WTC11 (cell line): ENCODE measurements at regions of chr11 and their contacts with region 1.

Region 1: GRCh38 chr11:118928108-118928870 is 2.6 kb upstream of the BCL9L start:
- DNase-seq: peak; percentile 94
- ATAC-seq: peak; percentile 53
- H3K4me3 Mint-ChIP-seq: peak overlapping the region; percentile 92
- H3K27ac Mint-ChIP-seq: peak overlapping the region; percentile 93
- H3K4me1 Mint-ChIP-seq: peaks cover 48% of the 10 kb centered on the region
- H3K27me3 Mint-ChIP-seq: peaks cover 24% of the 10 kb centered on the region
- CTCF ChIP-seq: peak; percentile 90

Region 2: GRCh38 chr11:118791111-118791965 is 137.0 kb before region 1 on chr11 and contains the start of gene DDX6:
- CTCF ChIA-PET with region 1: interaction called, 12 read pairs
- POLR2A ChIA-PET with region 1: interaction called, 7 read pairs
- DNase-seq: peak; percentile 91
- ATAC-seq: peak; percentile 41
- H3K4me3 Mint-ChIP-seq: peak within 1 kb of the TSS; percentile 98
- H3K27ac Mint-ChIP-seq: peak within 1 kb of the TSS; percentile 98
- H3K4me1 Mint-ChIP-seq: peaks cover 24% of the 10 kb centered on the region
- H3K27me3 Mint-ChIP-seq: no peaks in the 10 kb centered on the region
- CTCF ChIP-seq: no peak
- total RNA-seq, gene DDX6: 151 to 167 TPM (median 166 TPM) in 3 replicates

Region 3: DNA sequence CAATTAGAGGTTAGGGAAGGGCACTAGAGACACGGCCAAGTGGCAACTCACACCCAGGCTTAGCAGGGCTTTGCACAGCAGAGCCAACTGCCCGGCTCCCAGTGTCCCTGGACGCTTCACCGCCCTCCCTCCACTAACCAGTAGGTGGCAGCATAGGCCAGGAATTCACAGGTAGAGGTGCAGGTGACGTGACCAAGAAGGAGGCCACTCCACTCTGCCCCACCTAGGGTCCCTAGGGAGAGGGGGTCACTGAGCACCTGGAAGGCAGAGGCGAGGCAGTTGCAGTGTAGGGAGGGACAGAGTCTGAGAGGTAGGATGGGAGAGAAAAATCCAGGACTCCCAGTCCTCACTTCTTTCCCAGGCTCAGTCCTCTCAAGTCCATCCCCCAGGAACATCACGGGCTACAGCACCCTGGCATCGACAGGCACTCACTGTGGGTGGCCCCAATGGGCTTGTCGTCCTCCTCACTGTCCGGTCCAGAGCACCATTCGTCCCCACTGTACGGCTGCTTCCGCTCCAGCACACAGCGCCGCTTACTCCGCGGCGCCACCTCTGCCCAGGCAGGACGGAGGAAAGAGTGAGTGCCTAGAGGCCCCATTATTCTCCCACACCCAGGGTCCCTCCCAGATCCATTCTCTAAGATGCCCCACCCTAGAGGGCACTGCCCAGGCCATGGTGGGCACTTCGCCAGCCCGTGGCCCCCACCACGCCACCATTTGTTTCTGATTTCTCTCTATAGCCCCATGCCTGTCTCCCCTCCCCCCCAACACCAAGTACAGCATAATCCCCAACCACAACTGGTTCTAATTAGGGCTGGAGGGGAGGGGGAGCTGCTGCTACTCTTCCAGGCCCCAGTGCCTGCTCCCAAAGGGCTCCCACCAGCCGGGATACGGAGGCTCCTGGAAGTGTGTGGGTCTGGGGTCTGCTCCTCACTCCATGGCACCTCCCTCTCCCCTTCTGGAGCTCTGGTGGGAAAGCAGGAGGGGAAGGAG is 20.9 kb before region 1 on chr11:
- CTCF ChIA-PET with region 1: interaction called, 7 read pairs
- POLR2A ChIA-PET with region 1: interaction called, 76 read pairs
- DNase-seq: peak; percentile 95
- ATAC-seq: peak; percentile 31
- H3K4me3 Mint-ChIP-seq: peak overlapping the region; percentile 72
- H3K27ac Mint-ChIP-seq: peak overlapping the region; percentile 74
- H3K4me1 Mint-ChIP-seq: peaks cover 37% of the 10 kb centered on the region
- H3K27me3 Mint-ChIP-seq: no peaks in the 10 kb centered on the region
- CTCF ChIP-seq: peak; percentile 92

Region 4: GRCh38 chr11:118918128-118918685 is 10.1 kb before region 1 on chr11:
- CTCF ChIA-PET with region 1: interaction called, 34 read pairs
- POLR2A ChIA-PET with region 1: interaction called, 76 read pairs
- DNase-seq: peak; percentile 60
- ATAC-seq: peak; percentile 4
- H3K4me3 Mint-ChIP-seq: peak overlapping the region; percentile 46
- H3K27ac Mint-ChIP-seq: peak overlapping the region; percentile 98
- H3K4me1 Mint-ChIP-seq: peaks cover 88% of the 10 kb centered on the region
- H3K27me3 Mint-ChIP-seq: no peaks in the 10 kb centered on the region
- CTCF ChIP-seq: no peak

Region 5: DNA sequence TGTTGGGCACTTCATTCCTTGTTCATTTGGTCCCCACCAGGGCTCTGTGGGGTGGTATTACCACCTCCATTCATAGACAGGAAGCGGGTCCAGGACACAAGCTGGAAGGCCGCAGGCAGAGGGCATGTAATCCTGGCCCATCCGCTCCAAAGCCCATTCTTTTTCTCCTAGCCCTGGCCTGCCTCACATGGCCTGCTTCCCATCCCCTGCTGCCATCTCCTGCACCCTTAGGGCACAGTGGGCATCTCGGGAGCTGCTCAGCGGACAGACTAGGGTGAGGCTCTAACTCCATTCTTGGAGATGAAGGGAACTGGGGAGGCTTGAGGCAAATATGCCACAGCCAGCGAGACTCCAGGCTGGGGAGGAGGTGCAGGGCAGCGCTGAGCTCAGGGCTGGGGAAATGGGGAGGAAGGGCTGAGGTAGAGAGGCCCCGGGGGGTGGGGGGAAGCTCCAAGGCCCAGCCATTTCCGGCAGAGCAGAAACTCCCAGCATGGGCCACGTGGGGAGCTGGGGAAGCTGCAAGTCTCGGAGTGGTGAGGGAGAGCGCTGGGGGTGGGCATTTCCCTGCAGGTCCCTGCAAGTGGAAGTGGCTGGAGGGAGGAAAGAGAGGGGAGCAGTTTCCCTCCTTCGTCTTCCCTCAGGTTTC is 11.8 kb after region 1 on chr11:
- CTCF ChIA-PET with region 1: interaction called, 28 read pairs
- POLR2A ChIA-PET with region 1: no interaction called
- DNase-seq: peak; percentile 50
- ATAC-seq: peak; percentile 88
- H3K4me3 Mint-ChIP-seq: no peak overlapping the region
- H3K27ac Mint-ChIP-seq: no peak overlapping the region
- H3K4me1 Mint-ChIP-seq: peaks cover 29% of the 10 kb centered on the region
- H3K27me3 Mint-ChIP-seq: peaks cover 18% of the 10 kb centered on the region
- CTCF ChIP-seq: no peak

Region 6: GRCh38 chr11:118948000-118948399 is 19.7 kb after region 1 on chr11:
- CTCF ChIA-PET with region 1: interaction called, 17 read pairs
- POLR2A ChIA-PET with region 1: no interaction called
- DNase-seq: no peak
- ATAC-seq: no peak
- H3K4me3 Mint-ChIP-seq: no peak overlapping the region
- H3K27ac Mint-ChIP-seq: no peak overlapping the region
- H3K4me1 Mint-ChIP-seq: no peaks in the 10 kb centered on the region
- H3K27me3 Mint-ChIP-seq: peaks cover 22% of the 10 kb centered on the region
- CTCF ChIP-seq: no peak

Region 7: GRCh38 chr11:118956094-118956846 is 28.0 kb after region 1 on chr11 and contains the start of gene UPK2:
- CTCF ChIA-PET with region 1: interaction called, 19 read pairs
- POLR2A ChIA-PET with region 1: interaction called, 4 read pairs
- DNase-seq: peak; percentile 96
- ATAC-seq: peak; percentile 96
- H3K4me3 Mint-ChIP-seq: no peak within 1 kb of the TSS
- H3K27ac Mint-ChIP-seq: no peak within 1 kb of the TSS
- H3K4me1 Mint-ChIP-seq: peaks cover 14% of the 10 kb centered on the region
- H3K27me3 Mint-ChIP-seq: peaks cover 17% of the 10 kb centered on the region
- CTCF ChIP-seq: peak; percentile 96
- total RNA-seq, gene UPK2: not detected in 3 replicates